HCT116 (cell line): ENCODE measurements at regions of chr21 and their contacts with region 1.

Region 1: DNA sequence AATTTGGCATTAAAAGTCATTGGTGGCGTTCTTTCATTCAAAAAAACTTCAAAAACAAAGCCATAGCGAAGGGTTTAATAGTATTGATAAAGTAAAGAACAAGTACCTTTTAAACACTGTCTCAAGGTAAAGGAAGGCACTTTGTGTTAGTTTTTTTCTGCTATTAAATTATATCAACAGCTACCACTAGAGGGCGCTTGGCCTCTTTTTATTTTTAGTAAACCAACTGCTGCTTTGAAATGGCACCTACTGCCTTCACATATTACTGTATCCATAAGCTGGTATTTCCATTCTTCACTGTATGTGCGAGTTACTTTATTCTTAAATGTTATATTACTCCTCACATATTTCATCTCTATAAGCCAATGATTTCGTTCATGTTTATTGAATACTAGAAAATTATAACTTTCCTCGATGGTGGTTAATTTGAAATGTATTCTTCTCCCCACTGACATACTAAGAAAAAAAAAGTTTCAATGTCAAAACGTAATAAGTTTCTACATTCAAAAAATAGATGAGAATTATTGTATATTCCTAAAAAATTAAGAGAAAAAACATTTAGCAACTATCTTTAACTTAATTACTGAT is 125.7 kb upstream of the CXADR start:
- DNase-seq: peak; percentile 51
- ATAC-seq: peak; percentile 76
- H3K4me3 ChIP-seq: no peak overlapping the region
- H3K27ac ChIP-seq: no peak overlapping the region
- H3K4me1 ChIP-seq: no peaks in the 10 kb centered on the region
- H3K27me3 ChIP-seq: no peaks in the 10 kb centered on the region
- CTCF ChIP-seq: peak; percentile 40 to 79 (median 48); a peak in 5 of 6 replicates
- POLR2A ChIP-seq: no peak
- RAD21 ChIP-seq: peak; percentile 64

Region 2: GRCh38 chr21:17185674-17186073 is 201.4 kb before region 1 on chr21:
- CTCF ChIA-PET with region 1: no interaction called
- POLR2A ChIA-PET with region 1: no interaction called
- RAD21 ChIA-PET with region 1: no interaction called
- intact Hi-C with region 1: no loop called
- DNase-seq: no peak
- ATAC-seq: no peak
- H3K4me3 ChIP-seq: no peak overlapping the region
- H3K27ac ChIP-seq: no peak overlapping the region
- H3K4me1 ChIP-seq: no peaks in the 10 kb centered on the region
- H3K27me3 ChIP-seq: no peaks in the 10 kb centered on the region
- CTCF ChIP-seq: no peak
- POLR2A ChIP-seq: no peak
- RAD21 ChIP-seq: no peak

Region 3: GRCh38 chr21:17461014-17461413 is 73.9 kb after region 1 on chr21:
- CTCF ChIA-PET with region 1: no interaction called
- POLR2A ChIA-PET with region 1: no interaction called
- RAD21 ChIA-PET with region 1: no interaction called
- intact Hi-C with region 1: no loop called
- DNase-seq: no peak
- ATAC-seq: no peak
- H3K4me3 ChIP-seq: no peak overlapping the region
- H3K27ac ChIP-seq: no peak overlapping the region
- H3K4me1 ChIP-seq: peaks cover 9 to 27% of the 10 kb centered on the region in 2 experiments; a peak in 3 of 4 replicates
- H3K27me3 ChIP-seq: no peaks in the 10 kb centered on the region
- CTCF ChIP-seq: no peak
- POLR2A ChIP-seq: no peak
- RAD21 ChIP-seq: no peak

Region 4: GRCh38 chr21:17554679-17555465 is 167.7 kb after region 1 on chr21:
- CTCF ChIA-PET with region 1: interaction called, 141 read pairs
- POLR2A ChIA-PET with region 1: interaction called, 4 read pairs
- RAD21 ChIA-PET with region 1: interaction called, 8 to 11 read pairs
- intact Hi-C with region 1: loop called (anchors 1 kb)
- DNase-seq: no peak
- ATAC-seq: peak; percentile 70
- H3K4me3 ChIP-seq: no peak overlapping the region
- H3K27ac ChIP-seq: no peak overlapping the region
- H3K4me1 ChIP-seq: peaks cover 4 to 12% of the 10 kb centered on the region in 2 experiments; a peak in 2 of 4 replicates
- H3K27me3 ChIP-seq: no peaks in the 10 kb centered on the region
- CTCF ChIP-seq: peak; percentile 22 to 54 (median 49); a peak in 5 of 6 replicates
- POLR2A ChIP-seq: no peak
- RAD21 ChIP-seq: peak; percentile 44

Region 5: GRCh38 chr21:18007121-18007520 is 620.0 kb after region 1 on chr21:
- CTCF ChIA-PET with region 1: no interaction called
- POLR2A ChIA-PET with region 1: no interaction called
- RAD21 ChIA-PET with region 1: no interaction called
- intact Hi-C with region 1: no loop called
- DNase-seq: no peak
- ATAC-seq: no peak
- H3K4me3 ChIP-seq: no peak overlapping the region
- H3K27ac ChIP-seq: no peak overlapping the region
- H3K4me1 ChIP-seq: no peaks in the 10 kb centered on the region
- H3K27me3 ChIP-seq: no peaks in the 10 kb centered on the region
- CTCF ChIP-seq: no peak
- POLR2A ChIP-seq: no peak
- RAD21 ChIP-seq: no peak

Region 6: DNA sequence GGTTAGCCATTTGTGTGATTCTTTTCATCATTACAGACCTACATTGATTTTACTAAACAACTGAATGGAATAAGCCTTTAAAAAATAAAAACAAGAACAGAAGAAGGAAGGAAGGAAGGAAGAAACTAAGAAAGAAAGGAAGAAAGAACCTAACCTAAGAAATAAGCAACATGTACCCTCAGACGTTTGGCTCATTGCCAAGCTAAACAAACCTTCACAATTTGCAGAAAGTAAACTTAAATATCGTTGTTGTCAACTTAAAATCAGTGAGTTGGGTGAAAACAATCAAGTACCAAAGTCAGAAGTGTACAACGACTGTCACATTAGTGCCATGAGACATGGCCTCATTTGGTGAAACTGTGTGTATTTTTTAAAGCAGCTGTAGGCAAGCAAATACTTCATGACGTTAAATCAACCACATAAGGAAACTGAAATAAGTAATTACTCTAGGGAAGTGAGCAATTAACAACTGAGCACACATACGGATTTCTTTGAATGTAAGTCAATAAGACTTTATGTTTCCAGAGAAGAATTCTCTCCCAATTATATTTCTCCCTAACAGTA is 1329.5 kb after region 1 on chr21:
- CTCF ChIA-PET with region 1: no interaction called
- POLR2A ChIA-PET with region 1: no interaction called
- RAD21 ChIA-PET with region 1: no interaction called
- intact Hi-C with region 1: no loop called
- DNase-seq: no peak
- ATAC-seq: no peak
- H3K4me3 ChIP-seq: no peak overlapping the region
- H3K27ac ChIP-seq: no peak overlapping the region
- H3K4me1 ChIP-seq: no peaks in the 10 kb centered on the region
- H3K27me3 ChIP-seq: no peaks in the 10 kb centered on the region
- CTCF ChIP-seq: no peak
- POLR2A ChIP-seq: no peak
- RAD21 ChIP-seq: no peak